Activated CD4-positive, alpha-beta memory T cell treated with anti-CD3 and anti-CD28 coated beads, Interleukin-2, amount 10 ng/mL, durations not matched to agents 7 days and 5 days (primary cell): ENCODE measurements at regions of chr15 and their contacts with region 1.

Region 1: GRCh38 chr15:42929306-42929848 is 8.8 kb upstream of the TTBK2 start:
- DNase-seq: no peak
- H3K4me3 Mint-ChIP-seq: no peak overlapping the region
- H3K27ac Mint-ChIP-seq: no peak overlapping the region
- H3K4me1 Mint-ChIP-seq: no peaks in the 10 kb centered on the region
- H3K27me3 Mint-ChIP-seq: no peaks in the 10 kb centered on the region

Region 2: DNA sequence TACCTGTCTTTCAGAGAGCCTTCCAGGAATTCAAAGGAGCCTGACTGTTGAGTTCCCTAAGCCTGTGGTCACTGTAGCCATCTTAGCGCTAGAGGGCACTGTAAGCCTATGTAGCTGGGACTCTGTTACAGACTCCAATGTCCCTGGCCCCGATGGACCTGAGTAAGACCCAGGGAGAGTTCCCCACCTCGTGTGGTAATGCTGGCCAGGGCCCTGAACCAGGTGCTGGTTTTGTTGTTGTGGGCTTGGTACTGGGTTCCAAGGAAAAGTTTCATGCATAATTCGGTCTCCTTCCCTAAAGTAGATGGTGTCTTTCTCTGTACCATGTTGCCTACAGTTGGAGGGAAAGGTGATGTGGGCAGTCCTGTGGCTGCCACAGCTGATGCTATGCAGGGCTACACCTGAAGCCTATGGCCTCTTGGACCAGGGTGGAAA is 224.9 kb before region 1 on chr15:
- CTCF ChIA-PET with region 1: interaction called, 52 read pairs
- POLR2A ChIA-PET with region 1: no interaction called
- DNase-seq: peak; percentile 70
- H3K4me3 Mint-ChIP-seq: no peak overlapping the region
- H3K27ac Mint-ChIP-seq: no peak overlapping the region
- H3K4me1 Mint-ChIP-seq: peaks cover 7% of the 10 kb centered on the region
- H3K27me3 Mint-ChIP-seq: no peaks in the 10 kb centered on the region

Region 3: DNA sequence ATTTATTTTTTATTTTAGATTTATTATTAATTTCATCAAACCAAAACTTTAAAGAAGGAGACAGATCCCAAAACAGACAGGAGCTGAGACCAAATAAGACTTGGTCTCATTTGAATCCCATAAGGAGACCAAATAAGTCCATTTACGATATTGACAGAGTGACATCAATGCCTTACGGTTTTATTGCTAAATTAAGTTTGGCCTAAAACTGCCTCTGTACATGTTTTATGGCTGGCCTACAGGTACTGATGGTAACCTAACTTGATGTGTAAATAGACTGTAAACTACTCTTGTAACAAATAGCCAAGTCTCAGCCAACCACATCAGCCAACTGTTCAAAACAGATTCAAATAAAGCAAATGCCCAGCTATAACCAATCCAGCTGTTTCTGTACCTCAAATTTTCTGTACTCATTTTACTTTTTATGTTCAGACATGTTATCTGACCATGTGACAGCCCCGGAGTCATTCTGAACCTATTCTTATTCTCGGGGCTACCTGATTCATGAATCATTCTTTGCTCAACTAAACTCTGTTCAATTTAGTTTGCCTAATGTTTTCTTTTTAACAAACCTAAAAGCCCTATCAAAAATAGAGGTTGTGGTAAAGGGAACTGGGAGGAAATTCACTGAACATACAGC is 103.0 kb before region 1 on chr15:
- CTCF ChIA-PET with region 1: no interaction called
- POLR2A ChIA-PET with region 1: no interaction called
- DNase-seq: no peak
- H3K4me3 Mint-ChIP-seq: no peak overlapping the region
- H3K27ac Mint-ChIP-seq: no peak overlapping the region
- H3K4me1 Mint-ChIP-seq: no peaks in the 10 kb centered on the region
- H3K27me3 Mint-ChIP-seq: no peaks in the 10 kb centered on the region

Region 4: DNA sequence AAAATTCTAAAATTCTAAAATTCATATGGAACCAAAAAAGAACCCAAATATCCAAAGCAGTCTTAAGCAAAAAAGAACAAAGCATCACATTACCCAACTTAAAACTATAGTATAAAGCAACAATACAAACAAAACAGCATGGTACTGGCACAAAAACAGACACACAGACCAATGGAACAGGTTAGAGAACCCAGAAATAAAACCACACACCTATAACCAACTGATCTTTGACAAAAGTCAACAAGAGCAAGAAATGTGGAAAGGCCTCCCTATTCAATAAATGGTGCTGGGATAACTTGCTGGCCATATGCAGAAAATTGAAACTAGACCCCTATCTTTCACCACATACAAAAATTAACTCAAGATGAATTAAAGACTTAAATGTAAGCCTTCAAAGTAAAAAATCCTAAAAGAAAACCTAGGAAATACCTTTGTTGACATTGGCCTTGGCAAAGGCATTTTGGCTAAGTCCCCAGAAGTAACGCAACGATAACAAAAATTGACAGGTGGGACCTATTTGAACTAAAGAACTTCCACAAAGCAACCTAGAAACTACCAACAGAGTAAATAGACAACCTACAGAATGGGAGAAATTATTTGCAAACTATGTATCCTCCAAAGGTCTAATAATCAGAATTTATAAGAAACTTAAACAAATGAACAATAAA is 65.7 kb before region 1 on chr15:
- CTCF ChIA-PET with region 1: no interaction called
- POLR2A ChIA-PET with region 1: no interaction called
- DNase-seq: no peak
- H3K4me3 Mint-ChIP-seq: no peak overlapping the region
- H3K27ac Mint-ChIP-seq: no peak overlapping the region
- H3K4me1 Mint-ChIP-seq: no peaks in the 10 kb centered on the region
- H3K27me3 Mint-ChIP-seq: no peaks in the 10 kb centered on the region